H1 (cell line): ENCODE measurements at regions of chr15 and their contacts with region 1.

Region 1: GRCh38 chr15:50003786-50004334 is 115.2 kb downstream of the ATP8B4 start:
- DNase-seq: peak; percentile 86 to 92
- H3K4me3 ChIP-seq: peak overlapping the region in 1 of 4 experiments; percentile 41; a peak in 2 of 8 replicates
- H3K27ac ChIP-seq: no peak overlapping the region
- H3K4me1 ChIP-seq: peaks cover 0 to 4% (median 1%) of the 10 kb centered on the region in 4 experiments; a peak in 1 of 7 replicates
- H3K27me3 ChIP-seq: no peaks in the 10 kb centered on the region; a peak in 1 of 7 replicates
- CTCF ChIP-seq: peak; percentile 82 to 97 (median 95)
- EP300 ChIP-seq: no peak
- POLR2A ChIP-seq: no peak
- RAD21 ChIP-seq: peak; percentile 87 to 89

Region 2: GRCh38 chr15:49235446-49236124 is 768.3 kb before region 1 on chr15:
- CTCF ChIA-PET with region 1: interaction called, 14 read pairs
- POLR2A ChIA-PET with region 1: no interaction called
- DNase-seq: peak in 1 of 2 experiments; percentile 59
- H3K4me3 ChIP-seq: no peak overlapping the region
- H3K27ac ChIP-seq: no peak overlapping the region
- H3K4me1 ChIP-seq: 0 out of 7 replicates have a peak, but pooled peaks cover 0 to 2% (median 0%) of the 10 kb centered on the region in 4 experiments
- H3K27me3 ChIP-seq: no peaks in the 10 kb centered on the region
- CTCF ChIP-seq: peak in 2 of 3 experiments; percentile 80 to 88; a peak in 3 of 4 replicates
- EP300 ChIP-seq: no peak
- POLR2A ChIP-seq: no peak
- RAD21 ChIP-seq: peak; percentile 95 to 97

Region 3: DNA sequence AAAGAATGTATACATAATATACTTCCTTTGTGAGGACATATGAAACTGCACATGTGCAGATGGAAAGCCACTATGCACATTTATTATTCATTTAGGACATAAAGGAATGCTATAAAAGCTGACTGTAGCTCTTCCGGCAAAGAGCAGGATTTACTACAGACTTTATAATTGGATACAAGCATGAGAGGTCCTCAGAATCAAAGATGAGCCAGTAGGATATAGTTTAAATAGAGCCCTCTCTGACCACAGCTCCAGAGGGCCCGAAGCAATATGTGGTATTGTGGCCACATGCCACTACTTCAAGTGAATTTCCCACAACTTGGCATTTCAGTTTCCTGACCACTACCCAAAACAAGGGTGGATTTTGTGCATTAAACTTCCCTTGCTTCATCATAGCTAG is 25.7 kb before region 1 on chr15:
- CTCF ChIA-PET with region 1: interaction called, 12 read pairs
- POLR2A ChIA-PET with region 1: no interaction called
- DNase-seq: no peak
- H3K4me3 ChIP-seq: no peak overlapping the region
- H3K27ac ChIP-seq: no peak overlapping the region
- H3K4me1 ChIP-seq: no peaks in the 10 kb centered on the region
- H3K27me3 ChIP-seq: no peaks in the 10 kb centered on the region
- CTCF ChIP-seq: no peak
- EP300 ChIP-seq: no peak
- POLR2A ChIP-seq: no peak
- RAD21 ChIP-seq: no peak

Region 4: GRCh38 chr15:50017522-50017921 is 13.7 kb after region 1 on chr15:
- CTCF ChIA-PET with region 1: interaction called, 11 read pairs
- POLR2A ChIA-PET with region 1: no interaction called
- DNase-seq: no peak
- H3K4me3 ChIP-seq: no peak overlapping the region
- H3K27ac ChIP-seq: no peak overlapping the region
- H3K4me1 ChIP-seq: no peaks in the 10 kb centered on the region
- H3K27me3 ChIP-seq: no peaks in the 10 kb centered on the region
- CTCF ChIP-seq: no peak
- EP300 ChIP-seq: no peak
- POLR2A ChIP-seq: no peak
- RAD21 ChIP-seq: no peak